IMR-90 (cell line): ENCODE measurements at regions of chr12 and their contacts with region 1.

Region 1: DNA sequence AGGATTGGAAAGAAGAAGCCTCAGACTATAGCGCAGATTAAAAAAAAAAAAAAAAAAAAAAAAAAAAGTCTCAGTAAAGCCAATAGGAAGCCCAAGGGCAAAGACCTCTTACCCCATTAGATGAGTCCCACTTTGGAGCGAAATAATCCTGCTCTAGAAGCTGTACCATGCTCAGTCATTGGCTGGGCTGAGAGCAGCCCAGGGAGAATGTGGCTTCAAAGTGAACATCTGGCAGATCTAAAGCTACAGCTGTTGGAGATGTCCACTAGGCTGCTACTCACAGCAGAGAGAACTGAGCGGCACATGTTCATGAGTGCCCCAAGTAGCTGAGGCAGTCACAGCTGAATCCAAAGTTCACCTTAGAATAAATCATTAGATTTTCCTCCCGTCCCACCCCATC is 560.9 kb downstream of the MED13L start:
- DNase-seq: no peak
- ATAC-seq: no peak
- H3K4me3 ChIP-seq: no peak overlapping the region
- H3K27ac ChIP-seq: no peak overlapping the region
- H3K4me1 ChIP-seq: no peaks in the 10 kb centered on the region
- H3K27me3 ChIP-seq: no peaks in the 10 kb centered on the region; the same call in 1 of the 2 replicates
- CTCF ChIP-seq: no peak
- POLR2A ChIP-seq: no peak
- RAD21 ChIP-seq: no peak

Region 2: DNA sequence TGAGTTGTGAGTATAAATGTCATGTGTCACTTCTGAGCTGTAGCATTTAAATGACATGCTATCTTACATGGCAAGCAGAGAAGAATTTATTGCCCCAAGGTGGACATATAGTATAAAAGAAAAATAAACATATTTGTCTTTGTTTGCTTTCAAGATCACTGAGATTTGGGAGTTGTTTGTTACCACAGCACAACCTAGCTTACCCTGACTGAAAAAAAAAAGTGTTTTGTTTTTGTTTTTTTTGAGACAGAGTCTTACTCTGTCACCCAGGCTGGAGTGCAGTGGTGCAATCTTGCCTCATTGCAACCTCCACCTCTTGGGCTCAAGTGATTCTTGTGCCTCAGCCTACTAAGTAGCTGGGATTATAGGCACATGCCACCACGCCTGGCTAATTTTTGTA is 35.6 kb before region 1 on chr12:
- CTCF ChIA-PET with region 1: no interaction called
- POLR2A ChIA-PET with region 1: no interaction called
- dilution Hi-C with region 1: no loop called
- in situ Hi-C with region 1: no loop called
- intact Hi-C with region 1: loop called (anchors 1 kb)
- DNase-seq: no peak
- ATAC-seq: no peak
- H3K4me3 ChIP-seq: no peak overlapping the region
- H3K27ac ChIP-seq: no peak overlapping the region
- H3K4me1 ChIP-seq: no peaks in the 10 kb centered on the region
- H3K27me3 ChIP-seq: peaks cover 5% of the 10 kb centered on the region
- CTCF ChIP-seq: no peak
- POLR2A ChIP-seq: no peak
- RAD21 ChIP-seq: no peak

Region 3: GRCh38 chr12:115840159-115840558 is 123.6 kb after region 1 on chr12:
- CTCF ChIA-PET with region 1: no interaction called
- POLR2A ChIA-PET with region 1: no interaction called
- dilution Hi-C with region 1: no loop called
- in situ Hi-C with region 1: no loop called
- intact Hi-C with region 1: no loop called
- DNase-seq: no peak
- ATAC-seq: 0 out of 2 replicates have a peak, but pooled peaks have one; percentile 14
- H3K4me3 ChIP-seq: no peak overlapping the region
- H3K27ac ChIP-seq: no peak overlapping the region
- H3K4me1 ChIP-seq: no peaks in the 10 kb centered on the region
- H3K27me3 ChIP-seq: no peaks in the 10 kb centered on the region
- CTCF ChIP-seq: no peak
- POLR2A ChIP-seq: no peak
- RAD21 ChIP-seq: no peak